GM12878 (cell line): ENCODE measurements at regions of chr16 and their contacts with region 1.

Region 1: GRCh38 chr16:48687421-48688038 is 77.5 kb upstream of the N4BP1 start:
- DNase-seq: peak; percentile 13
- ATAC-seq: peak; percentile 97
- H3K4me3 ChIP-seq: no peak overlapping the region
- H3K27ac ChIP-seq: no peak overlapping the region
- H3K4me1 ChIP-seq: no peaks in the 10 kb centered on the region
- H3K27me3 ChIP-seq: no peaks in the 10 kb centered on the region; a peak in 1 of 4 replicates
- CTCF ChIP-seq: peak; percentile 71 to 82 (median 74)
- EP300 ChIP-seq: no peak
- POLR2A ChIP-seq: no peak
- RAD21 ChIP-seq: peak; percentile 85

Region 2: GRCh38 chr16:48999508-48999907 is 312.0 kb after region 1 on chr16:
- CTCF ChIA-PET with region 1: no interaction called
- POLR2A ChIA-PET with region 1: no interaction called
- RAD21 ChIA-PET with region 1: no interaction called
- SMC1A ChIA-PET with region 1: no interaction called
- in situ Hi-C with region 1: no loop called
- intact Hi-C with region 1: loop called (anchors 10 kb)
- DNase-seq: no peak
- ATAC-seq: no peak
- H3K4me3 ChIP-seq: no peak overlapping the region
- H3K27ac ChIP-seq: no peak overlapping the region
- H3K4me1 ChIP-seq: no peaks in the 10 kb centered on the region
- H3K27me3 ChIP-seq: peaks cover 0 to 2% of the 10 kb centered on the region in 2 experiments; a peak in 1 of 4 replicates
- CTCF ChIP-seq: no peak
- EP300 ChIP-seq: no peak
- POLR2A ChIP-seq: no peak
- RAD21 ChIP-seq: no peak

Region 3: DNA sequence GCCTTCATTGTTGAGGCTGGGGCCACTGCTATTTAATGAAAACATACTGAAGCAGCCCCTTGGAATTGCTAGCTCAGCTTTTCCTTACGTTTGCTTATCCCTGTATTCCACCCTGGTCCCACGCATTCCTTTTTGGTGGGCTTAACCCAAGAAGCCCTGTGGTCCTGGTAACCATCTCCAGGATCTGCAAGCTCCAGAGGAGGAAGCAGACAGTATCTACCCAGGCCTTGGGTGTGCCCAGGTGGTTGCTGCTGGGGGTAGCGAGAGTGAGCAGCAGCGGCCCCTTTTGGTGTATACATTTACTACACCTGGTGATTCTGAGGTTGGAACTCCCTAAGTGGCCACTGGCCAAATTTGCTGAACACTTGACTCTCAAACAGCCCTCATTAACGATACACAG is 496.4 kb after region 1 on chr16:
- CTCF ChIA-PET with region 1: interaction called, 3 read pairs
- POLR2A ChIA-PET with region 1: interaction called, 3 read pairs
- RAD21 ChIA-PET with region 1: no interaction called
- SMC1A ChIA-PET with region 1: no interaction called
- in situ Hi-C with region 1: no loop called
- intact Hi-C with region 1: loop called (anchors 5 kb)
- DNase-seq: no peak
- ATAC-seq: peak; percentile 77
- H3K4me3 ChIP-seq: no peak overlapping the region
- H3K27ac ChIP-seq: no peak overlapping the region
- H3K4me1 ChIP-seq: no peaks in the 10 kb centered on the region
- H3K27me3 ChIP-seq: no peaks in the 10 kb centered on the region; a peak in 1 of 4 replicates
- CTCF ChIP-seq: peak; percentile 35 to 50 (median 48); a peak in 5 of 6 replicates
- EP300 ChIP-seq: no peak
- POLR2A ChIP-seq: no peak
- RAD21 ChIP-seq: peak; percentile 34; the same call in 1 of the 2 replicates

Region 4: GRCh38 chr16:49340466-49340865 is 652.9 kb after region 1 on chr16:
- CTCF ChIA-PET with region 1: no interaction called
- POLR2A ChIA-PET with region 1: no interaction called
- RAD21 ChIA-PET with region 1: no interaction called
- SMC1A ChIA-PET with region 1: no interaction called
- in situ Hi-C with region 1: loop called (anchors 5 kb)
- intact Hi-C with region 1: no loop called
- DNase-seq: no peak
- ATAC-seq: no peak
- H3K4me3 ChIP-seq: no peak overlapping the region
- H3K27ac ChIP-seq: no peak overlapping the region
- H3K4me1 ChIP-seq: no peaks in the 10 kb centered on the region
- H3K27me3 ChIP-seq: no peaks in the 10 kb centered on the region; a peak in 1 of 4 replicates
- CTCF ChIP-seq: no peak
- EP300 ChIP-seq: no peak
- POLR2A ChIP-seq: no peak
- RAD21 ChIP-seq: no peak

Region 5: DNA sequence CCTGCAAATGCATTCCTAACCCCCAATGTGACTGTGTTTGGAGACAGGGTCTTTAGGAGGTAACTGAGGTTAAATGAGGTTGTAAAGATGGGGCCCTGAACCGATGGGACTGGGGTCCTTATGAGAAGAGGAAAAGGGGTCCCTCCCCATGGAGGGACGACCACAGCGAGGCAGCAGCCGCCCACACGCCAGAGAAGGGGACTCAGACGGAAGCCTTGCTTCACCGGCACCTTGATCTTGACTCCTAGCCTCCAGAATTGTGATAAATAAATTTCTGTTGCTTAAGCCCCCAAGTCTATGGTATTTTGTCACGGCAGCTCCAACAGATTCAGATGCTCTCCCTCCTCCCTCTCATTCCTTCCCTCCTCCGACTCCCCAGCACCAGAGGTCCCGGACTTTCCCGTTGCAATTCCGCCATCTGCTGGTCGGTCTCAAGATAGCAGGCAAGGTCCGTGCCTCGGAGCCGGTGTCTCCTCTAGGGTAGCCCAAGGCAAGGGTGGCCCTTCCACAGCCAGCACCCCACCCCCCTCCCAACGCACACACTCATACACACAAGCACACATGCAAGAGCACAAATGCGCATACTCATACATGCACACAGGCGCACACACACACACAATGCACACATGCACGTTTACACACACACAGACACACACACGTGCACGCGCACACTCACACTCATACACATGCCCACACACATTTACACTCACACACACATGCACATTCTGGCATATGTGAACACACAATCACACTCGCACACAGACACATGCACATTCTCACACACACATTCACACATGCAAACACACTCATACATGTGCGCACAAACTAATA is 663.0 kb after region 1 on chr16:
- CTCF ChIA-PET with region 1: interaction called, 61 read pairs
- POLR2A ChIA-PET with region 1: interaction called, 3 read pairs
- RAD21 ChIA-PET with region 1: interaction called, 12 read pairs
- SMC1A ChIA-PET with region 1: interaction called, 4 read pairs
- in situ Hi-C with region 1: no loop called
- intact Hi-C with region 1: loop called (anchors 1 kb)
- DNase-seq: no peak
- ATAC-seq: peak; percentile 85
- H3K4me3 ChIP-seq: no peak overlapping the region
- H3K27ac ChIP-seq: no peak overlapping the region
- H3K4me1 ChIP-seq: no peaks in the 10 kb centered on the region
- H3K27me3 ChIP-seq: no peaks in the 10 kb centered on the region
- CTCF ChIP-seq: peak; percentile 84 to 86 (median 85)
- EP300 ChIP-seq: no peak
- POLR2A ChIP-seq: no peak
- RAD21 ChIP-seq: peak; percentile 89